CD4-positive, alpha-beta memory T cell (primary cell): ENCODE measurements at regions of chr1 and their contacts with region 1.

Region 1: GRCh38 chr1:228082135-228082891 is at the start of gene ARF1:
- DNase-seq: peak; percentile 88 to 97 (median 95)
- H3K4me3 ChIP-seq: peak within 1 kb of the TSS; percentile 80 to 97
- H3K4me3 Mint-ChIP-seq: peak within 1 kb of the TSS; percentile 90 to 96 (median 94)
- H3K27ac ChIP-seq: peak within 1 kb of the TSS; percentile 97
- H3K27ac Mint-ChIP-seq: peak within 1 kb of the TSS; percentile 95 to 99 (median 97)
- H3K4me1 ChIP-seq: peaks cover 53% of the 10 kb centered on the region
- H3K4me1 Mint-ChIP-seq: peaks cover 35 to 56% (median 45%) of the 10 kb centered on the region in 4 donors
- H3K27me3 ChIP-seq: no peaks in the 10 kb centered on the region
- H3K27me3 Mint-ChIP-seq: no peaks in the 10 kb centered on the region
- total RNA-seq, gene ARF1: 265 to 270 TPM

Region 2: DNA sequence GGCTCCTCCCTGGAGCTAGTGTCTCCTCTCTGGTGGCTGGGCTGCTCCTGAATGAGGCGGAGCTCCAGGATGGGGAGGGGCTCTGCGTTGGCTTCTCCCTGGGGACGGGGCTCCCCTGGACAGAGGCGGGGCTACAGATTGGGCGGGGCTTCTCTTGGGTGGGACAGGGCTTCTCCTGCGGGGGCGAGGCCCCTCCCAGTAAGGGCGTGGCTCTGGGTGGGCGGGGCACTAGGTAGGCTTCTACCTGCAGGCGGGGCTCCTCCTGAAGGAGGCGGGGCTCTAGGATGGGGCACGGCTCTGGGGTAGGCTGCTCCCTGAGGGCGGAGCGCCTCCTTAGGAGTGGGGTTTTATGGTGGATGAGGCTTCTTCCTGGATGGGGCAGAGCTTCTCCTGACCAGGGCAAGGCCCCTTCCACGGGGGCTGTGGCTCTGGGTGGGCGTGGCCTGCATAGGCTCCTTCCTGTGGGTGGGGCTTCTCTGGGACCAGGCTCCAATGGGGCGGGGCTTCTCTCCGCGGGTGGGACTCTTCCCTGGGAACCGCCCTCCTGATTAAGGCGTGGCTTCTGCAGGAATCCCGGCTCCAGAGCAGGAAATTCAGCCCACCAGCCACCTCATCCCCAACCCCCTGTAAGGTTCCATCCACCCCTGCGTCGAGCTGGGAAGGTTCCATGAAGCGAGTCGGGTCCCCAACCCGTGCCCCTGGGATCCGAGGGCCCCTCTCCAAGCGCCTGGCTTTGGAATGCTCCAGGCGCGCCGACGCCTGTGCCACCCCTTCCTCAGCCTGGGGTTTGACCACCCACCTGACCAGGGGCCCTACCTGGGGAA is 22.5 kb before region 1 on chr1:
- CTCF ChIA-PET with region 1: no interaction called
- POLR2A ChIA-PET with region 1: interaction called, 7 read pairs
- intact Hi-C with region 1: loop called (anchors 1 kb)
- DNase-seq: peak; percentile 62 to 83 (median 66)
- H3K4me3 ChIP-seq: peak overlapping the region; percentile 36 to 55
- H3K4me3 Mint-ChIP-seq: peak overlapping the region; percentile 64 to 79 (median 76)
- H3K27ac ChIP-seq: no peak overlapping the region
- H3K27ac Mint-ChIP-seq: peak overlapping the region in 6 of 7 donors; percentile 37 to 77 (median 71)
- H3K4me1 ChIP-seq: peaks cover 24% of the 10 kb centered on the region
- H3K4me1 Mint-ChIP-seq: peaks cover 5 to 18% (median 12%) of the 10 kb centered on the region in 4 donors
- H3K27me3 ChIP-seq: peaks cover 16% of the 10 kb centered on the region
- H3K27me3 Mint-ChIP-seq: peaks cover 10 to 23% of the 10 kb centered on the region in 2 donors

Region 3: GRCh38 chr1:228102791-228103620 is 20.7 kb after region 1 on chr1 and contains the start of gene C1orf35:
- CTCF ChIA-PET with region 1: interaction called, 4 read pairs
- POLR2A ChIA-PET with region 1: interaction called, 146 read pairs
- intact Hi-C with region 1: loop called (anchors 1 kb)
- DNase-seq: peak; percentile 93 to 95 (median 94)
- H3K4me3 ChIP-seq: peak within 1 kb of the TSS; percentile 54 to 98
- H3K4me3 Mint-ChIP-seq: peak within 1 kb of the TSS; percentile 90 to 95 (median 94)
- H3K27ac ChIP-seq: peak within 1 kb of the TSS; percentile 85
- H3K27ac Mint-ChIP-seq: peak within 1 kb of the TSS; percentile 93 to 97 (median 97)
- H3K4me1 ChIP-seq: peaks cover 25% of the 10 kb centered on the region
- H3K4me1 Mint-ChIP-seq: peaks cover 6 to 61% (median 33%) of the 10 kb centered on the region in 4 donors
- H3K27me3 ChIP-seq: no peaks in the 10 kb centered on the region
- H3K27me3 Mint-ChIP-seq: no peaks in the 10 kb centered on the region
- total RNA-seq, gene C1orf35: 28.5 to 30.7 TPM

Region 4: DNA sequence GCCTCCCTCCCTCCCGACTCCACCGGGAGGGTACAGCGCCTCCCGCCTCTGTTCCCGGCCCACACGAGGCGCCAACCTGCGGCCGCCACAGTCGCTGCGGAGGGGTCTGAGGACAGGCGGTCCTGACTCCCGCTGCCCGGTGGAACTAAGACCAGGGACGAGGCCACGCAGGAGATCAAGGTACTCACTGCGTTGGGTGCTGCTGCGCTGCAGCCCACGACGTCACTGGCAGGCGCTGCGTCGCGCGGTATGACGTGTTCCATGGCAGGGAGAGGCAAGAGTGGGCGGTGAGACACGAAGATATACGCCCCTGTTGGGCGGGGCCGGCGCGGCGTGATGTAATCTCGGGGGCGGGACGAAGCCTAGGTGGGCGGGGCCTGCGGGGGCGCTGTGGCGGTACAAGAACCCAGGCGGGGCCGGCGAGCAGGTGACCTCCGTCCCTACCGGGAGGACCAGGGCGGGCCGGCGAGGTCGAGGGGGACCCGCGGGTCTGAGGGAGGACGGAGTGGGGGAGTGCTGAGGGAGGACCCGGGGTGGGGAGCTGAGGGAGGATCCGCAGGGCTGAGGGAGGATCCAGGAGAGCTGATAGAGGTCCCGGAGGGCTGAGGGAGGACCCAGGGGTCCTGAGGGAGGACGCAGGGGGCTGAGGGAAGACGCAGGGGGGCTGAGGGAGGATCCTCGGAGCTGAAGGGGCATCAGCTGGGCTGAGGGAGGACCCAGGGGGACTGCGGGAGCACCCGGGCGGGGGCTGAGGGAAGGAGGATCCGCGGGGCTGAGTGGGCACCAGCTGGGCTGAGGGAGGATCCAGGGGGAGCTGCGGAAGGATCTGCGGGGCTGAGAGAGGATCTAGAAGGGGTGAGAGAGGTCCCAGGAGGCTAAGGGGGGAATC is 27.0 kb after region 1 on chr1 and contains the start of gene MRPL55:
- CTCF ChIA-PET with region 1: interaction called, 3 read pairs
- POLR2A ChIA-PET with region 1: interaction called, 33 read pairs
- intact Hi-C with region 1: loop called (anchors 1 kb)
- DNase-seq: peak; percentile 97 to 99 (median 98)
- H3K4me3 ChIP-seq: peak within 1 kb of the TSS; percentile 68 to 76
- H3K4me3 Mint-ChIP-seq: peak within 1 kb of the TSS; percentile 89 to 98 (median 94)
- H3K27ac ChIP-seq: peak within 1 kb of the TSS; percentile 92
- H3K27ac Mint-ChIP-seq: peak within 1 kb of the TSS; percentile 92 to 98 (median 95)
- H3K4me1 ChIP-seq: peaks cover 21% of the 10 kb centered on the region
- H3K4me1 Mint-ChIP-seq: peaks cover 9 to 45% (median 26%) of the 10 kb centered on the region in 4 donors
- H3K27me3 ChIP-seq: no peaks in the 10 kb centered on the region
- H3K27me3 Mint-ChIP-seq: no peaks in the 10 kb centered on the region
- total RNA-seq, gene MRPL55: 57.8 to 64.5 TPM

Region 5: GRCh38 chr1:228147151-228147731 is 64.9 kb after region 1 on chr1:
- CTCF ChIA-PET with region 1: no interaction called
- POLR2A ChIA-PET with region 1: no interaction called
- intact Hi-C with region 1: no loop called
- DNase-seq: no peak
- H3K4me3 ChIP-seq: no peak overlapping the region
- H3K4me3 Mint-ChIP-seq: no peak overlapping the region
- H3K27ac ChIP-seq: no peak overlapping the region
- H3K27ac Mint-ChIP-seq: peak overlapping the region in 2 of 7 donors; percentile 2 to 10
- H3K4me1 ChIP-seq: peaks cover 33% of the 10 kb centered on the region
- H3K4me1 Mint-ChIP-seq: peaks cover 13 to 31% (median 21%) of the 10 kb centered on the region in 4 donors
- H3K27me3 ChIP-seq: no peaks in the 10 kb centered on the region
- H3K27me3 Mint-ChIP-seq: no peaks in the 10 kb centered on the region

Region 6: DNA sequence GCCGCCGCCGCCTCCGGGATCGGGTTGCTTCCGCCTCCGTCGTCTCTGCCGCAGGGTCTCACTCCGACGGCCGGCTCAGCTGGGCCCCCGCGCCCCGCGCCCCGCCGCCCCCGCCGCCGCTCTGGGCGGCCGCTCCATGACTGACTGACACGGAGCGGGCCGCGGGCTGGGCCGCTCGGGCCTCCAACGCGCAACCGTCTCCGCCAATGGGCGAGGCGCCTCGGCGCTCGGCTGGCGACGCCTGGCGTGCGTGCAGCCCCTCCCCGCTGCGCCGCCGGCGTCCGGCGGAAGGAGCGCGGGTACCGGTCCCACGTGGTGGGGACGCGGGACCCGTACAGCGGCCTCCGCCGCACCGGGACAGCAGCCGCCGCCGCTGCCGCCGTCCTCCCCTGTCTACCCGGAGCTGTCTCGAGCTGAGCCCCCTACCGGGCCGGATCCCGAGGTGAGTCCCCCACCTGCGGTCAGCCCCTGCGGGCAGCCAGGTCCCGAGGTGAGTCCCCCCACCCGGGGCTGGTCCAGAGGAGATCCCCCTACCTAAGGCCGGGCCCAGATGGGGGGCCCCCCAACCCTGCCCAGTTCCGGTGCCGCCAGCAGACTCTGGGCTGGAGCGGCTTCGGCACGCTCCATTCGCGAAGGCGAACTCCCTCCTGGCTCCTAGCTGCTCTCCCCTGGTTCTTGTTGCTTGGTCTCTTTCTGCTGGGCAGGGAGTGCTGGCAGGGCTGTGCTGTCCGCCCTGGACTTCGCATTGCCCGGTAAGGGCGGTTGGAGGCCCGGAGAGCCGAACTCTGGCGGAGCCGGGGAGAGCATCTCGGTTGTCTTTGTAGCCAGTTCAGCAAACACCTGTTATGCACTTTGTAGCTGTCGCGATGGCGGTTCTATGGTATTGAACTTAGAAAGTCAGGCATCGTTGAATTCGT is 1543.9 kb after region 1 on chr1 and contains the starts of genes TAF5L and URB2:
- CTCF ChIA-PET with region 1: no interaction called
- POLR2A ChIA-PET with region 1: no interaction called
- intact Hi-C with region 1: loop called (anchors 10 kb)
- DNase-seq: peak; percentile 84 to 88 (median 87)
- H3K4me3 ChIP-seq: peak within 1 kb of the TSS; percentile 77 to 98
- H3K4me3 Mint-ChIP-seq: peak within 1 kb of the TSS; percentile 97 to 100 (median 99)
- H3K27ac ChIP-seq: peak within 1 kb of the TSS; percentile 63
- H3K27ac Mint-ChIP-seq: peak within 1 kb of the TSS; percentile 91 to 99 (median 97)
- H3K4me1 ChIP-seq: peaks cover 41% of the 10 kb centered on the region
- H3K4me1 Mint-ChIP-seq: peaks cover 33 to 67% (median 51%) of the 10 kb centered on the region in 4 donors
- H3K27me3 ChIP-seq: no peaks in the 10 kb centered on the region
- H3K27me3 Mint-ChIP-seq: no peaks in the 10 kb centered on the region
- total RNA-seq, gene TAF5L: 20.7 to 21.3 TPM
- total RNA-seq, gene URB2: 8.5 to 9.4 TPM